GM12878 (cell line): ENCODE measurements at regions of chr14 and their contacts with region 1.

Region 1: DNA sequence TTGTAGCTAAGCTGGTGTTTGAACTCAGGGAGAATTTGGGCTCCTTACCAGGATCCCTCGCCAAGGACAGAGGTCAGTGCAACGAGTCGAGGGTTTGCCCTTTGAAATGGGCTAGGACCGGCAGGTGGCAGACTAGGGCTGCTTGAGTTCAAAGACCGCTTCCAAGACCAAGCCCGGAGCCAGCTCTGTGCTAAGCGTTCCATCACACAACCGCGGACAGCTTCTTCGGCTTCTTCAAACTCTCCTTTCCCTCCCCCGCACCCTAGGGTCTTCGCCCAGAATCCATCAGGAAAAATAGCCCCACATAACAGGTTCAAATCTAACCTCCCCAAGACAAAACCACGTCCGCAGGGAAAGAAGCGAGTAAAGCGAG is 705 bp upstream of the FLVCR2 start:
- DNase-seq: peak; percentile 34
- ATAC-seq: peak; percentile 97
- H3K4me3 ChIP-seq: peak overlapping the region; percentile 74
- H3K27ac ChIP-seq: peak overlapping the region; percentile 40; the same call in 1 of the 2 replicates
- H3K4me1 ChIP-seq: peaks cover 7% of the 10 kb centered on the region; the same call in 1 of the 2 replicates
- H3K27me3 ChIP-seq: no peaks in the 10 kb centered on the region
- CTCF ChIP-seq: peak; percentile 76 to 84 (median 81)
- EP300 ChIP-seq: no peak
- POLR2A ChIP-seq: no peak
- RAD21 ChIP-seq: peak; percentile 78

Region 2: GRCh38 chr14:74737753-74738325 is 839.9 kb before region 1 on chr14:
- CTCF ChIA-PET with region 1: no interaction called
- POLR2A ChIA-PET with region 1: no interaction called
- RAD21 ChIA-PET with region 1: no interaction called
- SMC1A ChIA-PET with region 1: no interaction called
- in situ Hi-C with region 1: no loop called
- intact Hi-C with region 1: no loop called
- DNase-seq: no peak
- ATAC-seq: no peak
- H3K4me3 ChIP-seq: no peak overlapping the region
- H3K27ac ChIP-seq: no peak overlapping the region
- H3K4me1 ChIP-seq: no peaks in the 10 kb centered on the region
- H3K27me3 ChIP-seq: no peaks in the 10 kb centered on the region
- CTCF ChIP-seq: no peak
- EP300 ChIP-seq: no peak
- POLR2A ChIP-seq: no peak
- RAD21 ChIP-seq: no peak

Region 3: GRCh38 chr14:75487155-75487671 is 90.5 kb before region 1 on chr14:
- CTCF ChIA-PET with region 1: interaction called, 20 read pairs
- POLR2A ChIA-PET with region 1: no interaction called
- RAD21 ChIA-PET with region 1: interaction called, 5 read pairs
- SMC1A ChIA-PET with region 1: interaction called, 11 read pairs
- in situ Hi-C with region 1: no loop called
- intact Hi-C with region 1: no loop called
- DNase-seq: peak; percentile 89
- ATAC-seq: peak; percentile 84
- H3K4me3 ChIP-seq: no peak overlapping the region
- H3K27ac ChIP-seq: peak overlapping the region; percentile 69
- H3K4me1 ChIP-seq: peaks cover 33% of the 10 kb centered on the region
- H3K27me3 ChIP-seq: no peaks in the 10 kb centered on the region
- CTCF ChIP-seq: no peak
- EP300 ChIP-seq: peak; percentile 75 to 86; a peak in 3 of 4 replicates
- POLR2A ChIP-seq: no peak
- RAD21 ChIP-seq: peak; percentile 9; the same call in 1 of the 2 replicates

Region 4: DNA sequence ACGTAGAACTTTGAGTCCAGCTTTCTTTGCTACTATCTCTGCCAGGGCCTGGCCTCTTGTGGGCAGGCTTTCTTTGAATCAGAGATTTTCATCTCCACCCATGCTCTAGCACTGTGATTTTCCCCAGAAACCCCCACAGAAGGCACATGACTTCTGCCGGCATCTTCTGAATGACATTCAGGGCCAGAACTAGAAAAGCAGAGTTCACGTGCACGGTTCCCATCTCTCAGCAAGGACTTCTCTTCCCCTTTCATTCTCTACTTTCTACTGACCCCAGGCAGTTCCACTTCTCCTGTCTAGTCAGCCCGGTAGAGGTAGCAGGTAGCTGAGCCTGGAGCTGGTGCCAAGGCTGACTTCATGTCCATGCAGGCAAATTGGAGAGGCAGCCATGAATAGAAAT is 28.5 kb before region 1 on chr14:
- CTCF ChIA-PET with region 1: interaction called, 14 read pairs
- POLR2A ChIA-PET with region 1: interaction called, 5 read pairs
- RAD21 ChIA-PET with region 1: interaction called, 4 read pairs
- SMC1A ChIA-PET with region 1: interaction called, 11 read pairs
- in situ Hi-C with region 1: no loop called
- intact Hi-C with region 1: no loop called
- DNase-seq: peak; percentile 79
- ATAC-seq: peak; percentile 87
- H3K4me3 ChIP-seq: no peak overlapping the region; the same call in 1 of the 2 replicates
- H3K27ac ChIP-seq: peak overlapping the region; percentile 53
- H3K4me1 ChIP-seq: peaks cover 23% of the 10 kb centered on the region
- H3K27me3 ChIP-seq: no peaks in the 10 kb centered on the region
- CTCF ChIP-seq: no peak
- EP300 ChIP-seq: peak in 1 of 2 experiments; percentile 49; a peak in 1 of 4 replicates
- POLR2A ChIP-seq: no peak
- RAD21 ChIP-seq: peak; percentile 7; the same call in 1 of the 2 replicates

Region 5: GRCh38 chr14:75604856-75605851 is 27.4 kb after region 1 on chr14:
- CTCF ChIA-PET with region 1: interaction called, 7 read pairs
- POLR2A ChIA-PET with region 1: interaction called, 3 read pairs
- RAD21 ChIA-PET with region 1: interaction called, 16 read pairs
- SMC1A ChIA-PET with region 1: interaction called, 5 read pairs
- in situ Hi-C with region 1: no loop called
- intact Hi-C with region 1: no loop called
- DNase-seq: no peak
- ATAC-seq: no peak
- H3K4me3 ChIP-seq: no peak overlapping the region
- H3K27ac ChIP-seq: no peak overlapping the region
- H3K4me1 ChIP-seq: no peaks in the 10 kb centered on the region
- H3K27me3 ChIP-seq: no peaks in the 10 kb centered on the region
- CTCF ChIP-seq: no peak
- EP300 ChIP-seq: no peak
- POLR2A ChIP-seq: no peak
- RAD21 ChIP-seq: no peak

Region 6: GRCh38 chr14:75654127-75654732 is 76.5 kb after region 1 on chr14:
- CTCF ChIA-PET with region 1: interaction called, 578 read pairs
- POLR2A ChIA-PET with region 1: interaction called, 12 read pairs
- RAD21 ChIA-PET with region 1: interaction called, 320 read pairs
- SMC1A ChIA-PET with region 1: interaction called, 375 read pairs
- in situ Hi-C with region 1: loop called (anchors 5 kb)
- intact Hi-C with region 1: loop called (anchors 1 kb)
- DNase-seq: peak; percentile 38
- ATAC-seq: peak; percentile 98
- H3K4me3 ChIP-seq: no peak overlapping the region
- H3K27ac ChIP-seq: no peak overlapping the region
- H3K4me1 ChIP-seq: no peaks in the 10 kb centered on the region
- H3K27me3 ChIP-seq: no peaks in the 10 kb centered on the region
- CTCF ChIP-seq: peak; percentile 97 to 98 (median 97)
- EP300 ChIP-seq: no peak
- POLR2A ChIP-seq: no peak
- RAD21 ChIP-seq: peak; percentile 97

Region 7: GRCh38 chr14:75842551-75842950 is 264.8 kb after region 1 on chr14:
- CTCF ChIA-PET with region 1: no interaction called
- POLR2A ChIA-PET with region 1: no interaction called
- RAD21 ChIA-PET with region 1: no interaction called
- SMC1A ChIA-PET with region 1: no interaction called
- in situ Hi-C with region 1: no loop called
- intact Hi-C with region 1: no loop called
- DNase-seq: no peak
- ATAC-seq: no peak
- H3K4me3 ChIP-seq: no peak overlapping the region
- H3K27ac ChIP-seq: no peak overlapping the region
- H3K4me1 ChIP-seq: no peaks in the 10 kb centered on the region
- H3K27me3 ChIP-seq: no peaks in the 10 kb centered on the region
- CTCF ChIP-seq: no peak
- EP300 ChIP-seq: no peak
- POLR2A ChIP-seq: no peak
- RAD21 ChIP-seq: no peak

Region 8: GRCh38 chr14:75906676-75907280 is 329.1 kb after region 1 on chr14:
- CTCF ChIA-PET with region 1: interaction called, 10 read pairs
- POLR2A ChIA-PET with region 1: no interaction called
- RAD21 ChIA-PET with region 1: interaction called, 6 read pairs
- SMC1A ChIA-PET with region 1: interaction called, 6 read pairs
- in situ Hi-C with region 1: no loop called
- intact Hi-C with region 1: no loop called
- DNase-seq: no peak
- ATAC-seq: peak; percentile 73
- H3K4me3 ChIP-seq: no peak overlapping the region
- H3K27ac ChIP-seq: no peak overlapping the region
- H3K4me1 ChIP-seq: no peaks in the 10 kb centered on the region
- H3K27me3 ChIP-seq: no peaks in the 10 kb centered on the region
- CTCF ChIP-seq: peak; percentile 69 to 78 (median 71)
- EP300 ChIP-seq: no peak
- POLR2A ChIP-seq: no peak
- RAD21 ChIP-seq: peak; percentile 85